ENCODE measurements at regions of chr1 and their contacts with region 1.

Region 1: GRCh38 chr1:27192039-27192529 is 37.2 kb upstream of the SLC9A1 start:
- DNase-seq: no peak
- ATAC-seq: no peak
- H3K4me3 ChIP-seq: no peak overlapping the region
- H3K27ac ChIP-seq: no peak overlapping the region
- H3K4me1 ChIP-seq: peaks cover 0 to 11% (median 0%) of the 10 kb centered on the region in 9 donors
- H3K27me3 ChIP-seq: peaks cover 0 to 5% (median 0%) of the 10 kb centered on the region in 7 donors
- CTCF ChIP-seq: no peak

Region 2: GRCh38 chr1:26999440-26999987 is 192.6 kb before region 1 on chr1:
- intact Hi-C with region 1: no loop called
- DNase-seq: peak; percentile 66 to 78
- ATAC-seq: peak; percentile 48 to 87 (median 78)
- H3K4me3 ChIP-seq: no peak overlapping the region
- H3K27ac ChIP-seq: peak overlapping the region; percentile 58 to 87 (median 76)
- H3K4me1 ChIP-seq: peaks cover 37 to 75% (median 62%) of the 10 kb centered on the region in 9 donors
- H3K27me3 ChIP-seq: peaks cover 0 to 29% (median 20%) of the 10 kb centered on the region in 7 donors
- CTCF ChIP-seq: no peak

Region 3: GRCh38 chr1:27102707-27103491 is 89.2 kb before region 1 on chr1:
- intact Hi-C with region 1: loop called in 6 of 10 experiments (anchors 2 to 5 kb)
- DNase-seq: peak; percentile 75 to 85
- ATAC-seq: peak; percentile 31 to 65 (median 50)
- H3K4me3 ChIP-seq: no peak overlapping the region
- H3K27ac ChIP-seq: no peak overlapping the region
- H3K4me1 ChIP-seq: peaks cover 14 to 36% (median 26%) of the 10 kb centered on the region in 9 donors
- H3K27me3 ChIP-seq: no peaks in the 10 kb centered on the region
- CTCF ChIP-seq: peak; percentile 94 to 98 (median 97)

Region 4: DNA sequence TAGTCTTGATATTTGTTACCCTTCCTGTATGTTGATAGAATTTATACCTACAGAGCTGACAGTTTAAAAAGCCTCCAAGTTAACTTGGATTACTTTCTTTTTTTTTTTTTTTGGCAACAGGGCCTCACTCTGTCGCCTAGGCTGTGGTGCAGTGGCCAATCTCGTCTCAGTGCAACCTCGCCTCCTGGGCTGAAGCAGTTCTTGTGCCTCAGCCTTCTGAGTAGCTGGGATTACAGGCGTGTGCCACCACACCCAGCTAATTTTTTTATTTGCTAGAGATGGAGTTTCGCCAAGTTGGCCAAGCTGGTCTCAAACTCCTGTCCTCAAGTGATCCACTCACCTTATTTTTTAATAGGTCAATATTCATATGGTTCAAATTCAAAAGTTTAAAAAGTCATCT is 75.1 kb after region 1 on chr1:
- intact Hi-C with region 1: loop called in 2 of 10 experiments (anchors 5 to 10 kb)
- DNase-seq: no peak
- ATAC-seq: no peak
- H3K4me3 ChIP-seq: no peak overlapping the region
- H3K27ac ChIP-seq: no peak overlapping the region
- H3K4me1 ChIP-seq: no peaks in the 10 kb centered on the region
- H3K27me3 ChIP-seq: no peaks in the 10 kb centered on the region
- CTCF ChIP-seq: no peak

Region 5: GRCh38 chr1:27275696-27276095 is 83.6 kb after region 1 on chr1:
- intact Hi-C with region 1: loop called in 7 of 10 experiments (anchors 5 to 10 kb)
- DNase-seq: no peak
- ATAC-seq: no peak
- H3K4me3 ChIP-seq: no peak overlapping the region
- H3K27ac ChIP-seq: no peak overlapping the region
- H3K4me1 ChIP-seq: peaks cover 0 to 4% (median 0%) of the 10 kb centered on the region in 9 donors
- H3K27me3 ChIP-seq: no peaks in the 10 kb centered on the region
- CTCF ChIP-seq: no peak